Natural killer cell (primary cell): ENCODE measurements at regions of chr21 and their contacts with region 1.

Region 1: DNA sequence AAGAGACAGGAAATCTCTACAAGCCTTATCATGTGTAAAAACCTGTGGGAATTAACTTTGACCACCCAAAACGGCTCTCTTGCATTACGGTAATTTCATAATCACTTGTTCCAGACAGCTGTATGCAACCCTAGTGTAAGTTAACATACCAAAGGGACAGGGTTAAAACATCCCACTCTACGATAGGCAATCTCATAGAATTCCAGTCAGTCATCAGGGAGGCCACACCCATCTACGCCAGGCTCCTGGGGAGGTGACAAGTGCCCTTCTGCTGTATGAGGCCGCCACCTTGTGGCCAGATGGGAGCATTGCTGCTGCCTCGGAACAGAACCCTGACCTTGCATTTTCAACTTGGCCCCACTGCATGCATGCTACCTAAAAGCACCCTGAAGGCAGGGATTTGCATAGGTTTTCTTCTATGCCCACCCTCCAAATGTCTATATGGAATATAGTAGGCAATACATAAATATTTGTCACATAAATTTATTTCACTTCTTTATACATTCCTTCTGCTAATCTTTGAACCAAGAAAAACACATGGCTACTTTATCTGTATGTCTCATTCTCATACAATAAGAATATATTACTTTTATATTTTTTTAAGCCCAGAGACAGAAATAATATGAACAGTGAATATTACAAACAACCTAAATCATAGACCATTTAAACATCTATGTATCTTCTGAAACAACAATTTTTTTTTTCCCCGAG is 12.6 kb downstream of the HSF2BP start:
- DNase-seq: peak; percentile 79 to 93
- ATAC-seq: peak; percentile 97 to 100 (median 99)
- H3K4me3 ChIP-seq: no peak overlapping the region
- H3K4me3 Mint-ChIP-seq: peak overlapping the region; percentile 21
- H3K27ac ChIP-seq: no peak overlapping the region
- H3K27ac Mint-ChIP-seq: peak overlapping the region in 1 of 2 donors; percentile 58
- H3K4me1 ChIP-seq: peaks cover 5% of the 10 kb centered on the region
- H3K4me1 Mint-ChIP-seq: peaks cover 7 to 9% of the 10 kb centered on the region in 2 donors
- H3K27me3 ChIP-seq: no peaks in the 10 kb centered on the region
- H3K27me3 Mint-ChIP-seq: peaks cover 6 to 9% of the 10 kb centered on the region in 2 donors
- CTCF ChIP-seq: peak; percentile 100

Region 2: GRCh38 chr21:43318841-43319781 is 327.6 kb before region 1 on chr21:
- intact Hi-C with region 1: loop called (anchors 5 kb)
- DNase-seq: no peak
- ATAC-seq: no peak
- H3K4me3 ChIP-seq: no peak overlapping the region
- H3K4me3 Mint-ChIP-seq: no peak overlapping the region
- H3K27ac ChIP-seq: no peak overlapping the region
- H3K27ac Mint-ChIP-seq: no peak overlapping the region
- H3K4me1 ChIP-seq: peaks cover 5% of the 10 kb centered on the region
- H3K4me1 Mint-ChIP-seq: peaks cover 0 to 7% of the 10 kb centered on the region in 2 donors
- H3K27me3 ChIP-seq: peaks cover 3% of the 10 kb centered on the region
- H3K27me3 Mint-ChIP-seq: peaks cover 6 to 8% of the 10 kb centered on the region in 2 donors
- CTCF ChIP-seq: no peak